Caco-2 (cell line): ENCODE measurements at regions of chr11 and their contacts with region 1.

Region 1: GRCh38 chr11:83156150-83156995 is 558 bp upstream of the PCF11 start:
- DNase-seq: peak; percentile 100
- H3K4me3 ChIP-seq: peak overlapping the region; percentile 49
- H3K4me3 Mint-ChIP-seq: peak overlapping the region; percentile 95
- H3K27ac Mint-ChIP-seq: peak overlapping the region; percentile 99
- H3K4me1 ChIP-seq: peaks cover 21% of the 10 kb centered on the region
- H3K4me1 Mint-ChIP-seq: peaks cover 28% of the 10 kb centered on the region
- H3K27me3 ChIP-seq: no peaks in the 10 kb centered on the region
- H3K27me3 Mint-ChIP-seq: no peaks in the 10 kb centered on the region
- CTCF ChIP-seq: no peak

Region 2: GRCh38 chr11:82906244-82906654 is 250.1 kb before region 1 on chr11:
- CTCF ChIA-PET with region 1: interaction called, 9 read pairs
- POLR2A ChIA-PET with region 1: interaction called, 34 read pairs
- intact Hi-C with region 1: loop called (anchors 1 kb)
- DNase-seq: no peak
- H3K4me3 ChIP-seq: no peak overlapping the region
- H3K4me3 Mint-ChIP-seq: no peak overlapping the region
- H3K27ac Mint-ChIP-seq: no peak overlapping the region
- H3K4me1 ChIP-seq: no peaks in the 10 kb centered on the region; the same call in 1 of the 2 replicates
- H3K4me1 Mint-ChIP-seq: peaks cover 21% of the 10 kb centered on the region
- H3K27me3 ChIP-seq: no peaks in the 10 kb centered on the region
- H3K27me3 Mint-ChIP-seq: no peaks in the 10 kb centered on the region
- CTCF ChIP-seq: peak; percentile 59 to 75

Region 3: GRCh38 chr11:83071567-83072349 is 84.6 kb before region 1 on chr11 and contains the start of gene RAB30:
- CTCF ChIA-PET with region 1: interaction called, 11 read pairs
- POLR2A ChIA-PET with region 1: interaction called, 42 read pairs
- intact Hi-C with region 1: loop called (anchors 1 kb)
- DNase-seq: peak; percentile 99 to 100
- H3K4me3 ChIP-seq: peak within 1 kb of the TSS; percentile 62
- H3K4me3 Mint-ChIP-seq: no peak within 1 kb of the TSS
- H3K27ac Mint-ChIP-seq: no peak within 1 kb of the TSS
- H3K4me1 ChIP-seq: peaks cover 33% of the 10 kb centered on the region
- H3K4me1 Mint-ChIP-seq: peaks cover 26% of the 10 kb centered on the region
- H3K27me3 ChIP-seq: no peaks in the 10 kb centered on the region
- H3K27me3 Mint-ChIP-seq: no peaks in the 10 kb centered on the region
- CTCF ChIP-seq: no peak
- total RNA-seq, gene RAB30: 13.0 and 13.5 TPM in 2 replicates

Region 4: DNA sequence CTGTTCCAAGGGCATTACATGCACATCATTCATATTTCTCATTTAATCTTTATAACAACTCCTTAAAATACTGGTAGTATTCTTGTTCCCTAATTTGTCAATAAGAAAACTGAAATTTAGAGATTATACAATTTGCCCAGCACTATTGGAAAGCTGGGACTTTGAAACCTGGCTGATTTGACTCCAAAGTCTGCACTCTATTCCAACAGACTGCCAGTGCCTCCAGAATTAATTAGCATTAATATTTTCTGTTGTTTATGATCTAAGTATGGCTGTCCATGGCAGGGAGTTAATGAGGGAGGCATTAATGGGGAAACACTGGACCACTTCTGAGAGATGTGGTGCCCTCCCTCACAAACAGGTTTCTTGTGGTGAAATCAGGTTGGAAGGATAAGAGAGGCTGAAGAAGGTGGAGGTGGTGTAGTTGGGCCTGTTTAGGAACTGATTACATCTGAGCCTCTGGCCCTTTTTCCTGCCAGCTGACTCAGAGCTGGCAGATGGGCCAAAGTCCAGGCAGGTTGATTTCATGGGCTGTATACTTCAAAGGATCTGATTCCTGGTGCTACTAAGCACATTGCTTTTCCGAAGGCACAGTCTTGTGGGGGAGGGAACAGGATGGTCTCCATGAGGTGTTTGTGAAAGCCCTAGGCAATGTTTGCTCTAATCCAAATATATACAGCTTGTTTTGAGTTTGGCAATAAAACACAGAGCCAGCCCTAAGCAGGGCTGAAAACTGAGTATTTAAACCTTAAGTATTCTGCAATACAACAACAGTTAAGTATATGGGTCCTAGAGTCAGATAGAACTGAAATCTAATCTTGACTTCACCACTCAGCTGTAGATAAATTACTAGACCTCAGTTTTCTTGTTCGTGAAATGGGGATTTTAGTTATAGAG is 63.6 kb before region 1 on chr11:
- CTCF ChIA-PET with region 1: interaction called, 29 read pairs
- POLR2A ChIA-PET with region 1: interaction called, 57 read pairs
- intact Hi-C with region 1: loop called (anchors 1 kb)
- DNase-seq: peak; percentile 95 to 96
- H3K4me3 ChIP-seq: no peak overlapping the region
- H3K4me3 Mint-ChIP-seq: peak overlapping the region; percentile 21
- H3K27ac Mint-ChIP-seq: peak overlapping the region; percentile 55
- H3K4me1 ChIP-seq: peaks cover 43% of the 10 kb centered on the region
- H3K4me1 Mint-ChIP-seq: peaks cover 65% of the 10 kb centered on the region
- H3K27me3 ChIP-seq: no peaks in the 10 kb centered on the region
- H3K27me3 Mint-ChIP-seq: no peaks in the 10 kb centered on the region
- CTCF ChIP-seq: no peak

Region 5: GRCh38 chr11:83187465-83187864 is 31.1 kb after region 1 on chr11:
- CTCF ChIA-PET with region 1: no interaction called
- POLR2A ChIA-PET with region 1: interaction called, 12 read pairs
- intact Hi-C with region 1: no loop called
- DNase-seq: no peak
- H3K4me3 ChIP-seq: no peak overlapping the region
- H3K4me3 Mint-ChIP-seq: no peak overlapping the region
- H3K27ac Mint-ChIP-seq: peak overlapping the region; percentile 8
- H3K4me1 ChIP-seq: peaks cover 3% of the 10 kb centered on the region; the same call in 1 of the 2 replicates
- H3K4me1 Mint-ChIP-seq: peaks cover 10% of the 10 kb centered on the region
- H3K27me3 ChIP-seq: no peaks in the 10 kb centered on the region
- H3K27me3 Mint-ChIP-seq: no peaks in the 10 kb centered on the region
- CTCF ChIP-seq: no peak

Region 6: GRCh38 chr11:83206221-83206620 is 49.8 kb after region 1 on chr11:
- CTCF ChIA-PET with region 1: no interaction called
- POLR2A ChIA-PET with region 1: no interaction called
- intact Hi-C with region 1: no loop called
- DNase-seq: no peak
- H3K4me3 ChIP-seq: no peak overlapping the region
- H3K4me3 Mint-ChIP-seq: no peak overlapping the region
- H3K27ac Mint-ChIP-seq: no peak overlapping the region
- H3K4me1 ChIP-seq: no peaks in the 10 kb centered on the region
- H3K4me1 Mint-ChIP-seq: no peaks in the 10 kb centered on the region
- H3K27me3 ChIP-seq: no peaks in the 10 kb centered on the region
- H3K27me3 Mint-ChIP-seq: no peaks in the 10 kb centered on the region
- CTCF ChIP-seq: no peak

Region 7: GRCh38 chr11:83257761-83258168 is 101.4 kb after region 1 on chr11:
- CTCF ChIA-PET with region 1: no interaction called
- POLR2A ChIA-PET with region 1: no interaction called
- intact Hi-C with region 1: loop called (anchors 1 kb)
- DNase-seq: peak in 1 of 2 experiments; percentile 63
- H3K4me3 ChIP-seq: no peak overlapping the region
- H3K4me3 Mint-ChIP-seq: no peak overlapping the region
- H3K27ac Mint-ChIP-seq: peak overlapping the region; percentile 87
- H3K4me1 ChIP-seq: peaks cover 43% of the 10 kb centered on the region
- H3K4me1 Mint-ChIP-seq: peaks cover 32% of the 10 kb centered on the region
- H3K27me3 ChIP-seq: no peaks in the 10 kb centered on the region
- H3K27me3 Mint-ChIP-seq: no peaks in the 10 kb centered on the region
- CTCF ChIP-seq: no peak

Region 8: DNA sequence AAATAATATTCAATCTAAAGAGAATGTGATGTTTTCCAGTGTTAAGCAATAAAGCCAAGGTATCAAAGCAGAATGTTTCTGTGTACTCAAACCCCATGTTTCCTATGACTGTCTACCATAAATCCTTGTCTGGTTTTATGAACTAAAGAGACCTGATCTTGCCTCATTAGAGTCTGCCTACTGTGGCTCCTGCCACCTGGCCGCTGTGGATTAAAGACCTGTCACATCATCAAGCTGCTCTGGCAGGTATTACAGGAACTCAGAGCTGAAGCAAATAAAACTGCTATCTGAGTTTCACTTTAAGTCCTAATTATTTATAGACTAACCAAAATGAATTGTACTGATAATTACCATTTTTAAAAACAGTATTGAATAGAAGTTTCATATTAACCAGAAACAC is 337.5 kb after region 1 on chr11:
- CTCF ChIA-PET with region 1: no interaction called
- POLR2A ChIA-PET with region 1: no interaction called
- intact Hi-C with region 1: no loop called
- DNase-seq: no peak
- H3K4me3 ChIP-seq: no peak overlapping the region
- H3K4me3 Mint-ChIP-seq: no peak overlapping the region
- H3K27ac Mint-ChIP-seq: no peak overlapping the region
- H3K4me1 ChIP-seq: no peaks in the 10 kb centered on the region
- H3K4me1 Mint-ChIP-seq: no peaks in the 10 kb centered on the region
- H3K27me3 ChIP-seq: no peaks in the 10 kb centered on the region
- H3K27me3 Mint-ChIP-seq: peaks cover 8% of the 10 kb centered on the region
- CTCF ChIP-seq: no peak

Region 9: DNA sequence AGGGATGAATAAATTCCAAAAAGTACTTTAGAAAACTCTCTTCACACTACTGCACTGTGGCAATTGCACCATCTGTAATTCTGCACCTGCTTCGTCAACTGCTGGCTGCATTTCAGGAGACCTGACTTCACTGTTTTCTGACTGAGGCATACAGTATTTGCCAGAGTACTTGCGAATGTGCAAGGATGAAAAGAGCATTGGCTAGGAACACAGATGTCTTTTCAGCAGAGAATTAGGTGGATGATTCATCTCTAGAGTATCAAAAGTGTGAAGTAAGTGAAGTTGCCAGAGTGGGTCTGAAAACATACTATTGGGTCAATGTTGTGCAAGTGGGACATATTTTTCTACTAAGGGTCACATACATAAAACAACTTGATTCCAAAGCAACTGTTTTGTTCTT is 557.3 kb after region 1 on chr11:
- CTCF ChIA-PET with region 1: no interaction called
- POLR2A ChIA-PET with region 1: no interaction called
- intact Hi-C with region 1: loop called (anchors 1 kb)
- DNase-seq: no peak
- H3K4me3 ChIP-seq: no peak overlapping the region
- H3K4me3 Mint-ChIP-seq: no peak overlapping the region
- H3K27ac Mint-ChIP-seq: peak overlapping the region; percentile 69
- H3K4me1 ChIP-seq: peaks cover 62% of the 10 kb centered on the region
- H3K4me1 Mint-ChIP-seq: peaks cover 64% of the 10 kb centered on the region
- H3K27me3 ChIP-seq: no peaks in the 10 kb centered on the region
- H3K27me3 Mint-ChIP-seq: no peaks in the 10 kb centered on the region
- CTCF ChIP-seq: no peak